ENCODE measurements at regions of chr18 and their contacts with region 1.

Region 1: GRCh38 chr18:67515945-67516538 is 478 bp downstream of the DSEL start:
- DNase-seq: peak; percentile 81 to 89 (median 84)
- ATAC-seq: peak; percentile 45 to 79 (median 68)
- H3K4me3 ChIP-seq: peak overlapping the region; percentile 65 to 96 (median 84)
- H3K27ac ChIP-seq: peak overlapping the region; percentile 57 to 92 (median 80)
- H3K4me1 ChIP-seq: peaks cover 0 to 21% (median 11%) of the 10 kb centered on the region in 12 donors
- H3K27me3 ChIP-seq: no peaks in the 10 kb centered on the region
- CTCF ChIP-seq: peak; percentile 51 to 80 (median 69)
- POLR2A ChIP-seq: no peak

Region 2: GRCh38 chr18:67402543-67402942 is 113.5 kb before region 1 on chr18:
- intact Hi-C with region 1: no loop called
- DNase-seq: no peak
- ATAC-seq: no peak
- H3K4me3 ChIP-seq: no peak overlapping the region
- H3K27ac ChIP-seq: no peak overlapping the region
- H3K4me1 ChIP-seq: no peaks in the 10 kb centered on the region
- H3K27me3 ChIP-seq: no peaks in the 10 kb centered on the region
- CTCF ChIP-seq: no peak
- POLR2A ChIP-seq: no peak

Region 3: DNA sequence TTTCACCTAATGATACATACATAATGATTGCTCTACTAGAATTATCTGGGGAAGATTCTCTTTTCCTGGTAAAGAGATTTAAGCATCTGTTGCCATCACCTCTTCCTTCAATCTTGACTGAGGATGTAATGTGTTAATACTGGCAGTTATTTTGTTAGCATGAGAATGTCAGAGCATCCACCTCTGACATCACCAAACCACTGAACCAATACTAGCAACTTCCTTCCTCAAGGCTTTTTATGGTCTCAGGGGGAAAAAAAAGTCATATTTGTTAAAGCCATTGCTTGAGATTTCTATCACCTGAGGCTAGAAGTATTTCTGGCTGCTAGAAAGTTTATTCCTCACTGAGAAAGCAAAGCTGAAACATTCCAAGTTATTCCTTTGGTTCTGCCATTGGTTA is 48.0 kb before region 1 on chr18:
- intact Hi-C with region 1: no loop called
- DNase-seq: no peak
- ATAC-seq: no peak
- H3K4me3 ChIP-seq: no peak overlapping the region
- H3K27ac ChIP-seq: no peak overlapping the region
- H3K4me1 ChIP-seq: no peaks in the 10 kb centered on the region
- H3K27me3 ChIP-seq: no peaks in the 10 kb centered on the region
- CTCF ChIP-seq: no peak
- POLR2A ChIP-seq: no peak

Region 4: GRCh38 chr18:68623342-68623741 is 1107.3 kb after region 1 on chr18:
- intact Hi-C with region 1: loop called in 1 of 10 experiments (anchors 10 kb)
- DNase-seq: no peak
- ATAC-seq: peak in 1 of 4 donors; percentile 53
- H3K4me3 ChIP-seq: no peak overlapping the region
- H3K27ac ChIP-seq: no peak overlapping the region
- H3K4me1 ChIP-seq: no peaks in the 10 kb centered on the region
- H3K27me3 ChIP-seq: no peaks in the 10 kb centered on the region
- CTCF ChIP-seq: peak; percentile 19 to 66 (median 49)
- POLR2A ChIP-seq: no peak

Region 5: GRCh38 chr18:68660354-68661183 is 1144.5 kb after region 1 on chr18:
- intact Hi-C with region 1: loop called in 2 of 10 experiments (anchors 5 to 10 kb)
- DNase-seq: no peak
- ATAC-seq: no peak
- H3K4me3 ChIP-seq: no peak overlapping the region
- H3K27ac ChIP-seq: no peak overlapping the region
- H3K4me1 ChIP-seq: no peaks in the 10 kb centered on the region
- H3K27me3 ChIP-seq: peaks cover 0 to 3% (median 0%) of the 10 kb centered on the region in 9 donors
- CTCF ChIP-seq: peak; percentile 36 to 69 (median 56)
- POLR2A ChIP-seq: no peak

Region 6: DNA sequence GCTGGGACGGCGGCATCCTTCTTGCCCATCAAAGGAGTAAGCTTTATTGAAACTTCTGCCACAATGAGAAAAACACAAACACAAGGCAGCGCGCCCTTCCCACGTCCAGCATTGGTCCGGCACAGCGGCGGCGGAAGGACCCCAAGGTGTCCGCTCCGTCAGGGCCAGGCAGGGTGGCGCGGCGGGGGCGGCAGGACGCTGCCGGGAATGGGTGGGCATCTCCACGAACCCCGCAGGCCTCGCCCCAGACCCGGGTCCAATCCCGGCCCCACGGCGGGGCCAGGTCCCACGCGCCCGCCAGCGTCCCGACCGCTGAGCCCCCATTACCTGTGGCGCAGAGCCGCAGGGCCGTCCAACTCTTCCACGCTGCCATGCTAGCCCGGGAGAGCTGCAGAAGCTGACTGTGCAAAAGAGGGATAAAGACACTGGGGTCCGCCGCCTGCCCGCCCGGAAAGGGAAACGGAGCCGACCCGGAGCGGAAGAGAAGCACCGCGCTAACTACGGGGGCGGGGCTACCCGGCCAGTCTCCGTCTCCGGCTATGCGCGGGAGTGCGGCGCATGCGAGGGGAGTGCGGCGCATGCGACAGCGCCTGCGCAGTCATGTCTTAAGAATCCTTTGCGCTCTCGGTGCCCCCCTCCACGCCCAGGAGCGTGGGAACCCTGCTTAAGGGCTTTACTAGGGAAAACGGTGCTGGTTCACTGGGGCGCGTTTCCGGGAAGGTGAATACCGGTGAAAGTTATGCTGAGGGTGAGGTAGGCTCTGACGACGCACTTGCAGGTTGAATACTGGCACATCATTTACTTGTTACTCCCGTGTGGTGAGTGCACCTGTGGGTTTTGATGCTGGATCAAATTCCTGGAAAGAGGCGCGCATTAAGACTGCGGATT is 1198.8 kb after region 1 on chr18 and contains the start of gene TMX3:
- intact Hi-C with region 1: loop called in 1 of 10 experiments (anchors 5 kb)
- DNase-seq: peak; percentile 91 to 95 (median 94)
- ATAC-seq: peak; percentile 99 to 100 (median 100)
- H3K4me3 ChIP-seq: peak within 1 kb of the TSS; percentile 77 to 99 (median 92)
- H3K27ac ChIP-seq: peak within 1 kb of the TSS; percentile 54 to 91 (median 84)
- H3K4me1 ChIP-seq: peaks cover 0 to 34% (median 20%) of the 10 kb centered on the region in 12 donors
- H3K27me3 ChIP-seq: no peaks in the 10 kb centered on the region
- CTCF ChIP-seq: no peak
- POLR2A ChIP-seq: peak in 1 of 2 donors; percentile 52
- total RNA-seq, gene TMX3: 20.0 to 39.0 (median 31.7) TPM